ENCODE measurements at regions of chr7 and their contacts with region 1.

Region 1: DNA sequence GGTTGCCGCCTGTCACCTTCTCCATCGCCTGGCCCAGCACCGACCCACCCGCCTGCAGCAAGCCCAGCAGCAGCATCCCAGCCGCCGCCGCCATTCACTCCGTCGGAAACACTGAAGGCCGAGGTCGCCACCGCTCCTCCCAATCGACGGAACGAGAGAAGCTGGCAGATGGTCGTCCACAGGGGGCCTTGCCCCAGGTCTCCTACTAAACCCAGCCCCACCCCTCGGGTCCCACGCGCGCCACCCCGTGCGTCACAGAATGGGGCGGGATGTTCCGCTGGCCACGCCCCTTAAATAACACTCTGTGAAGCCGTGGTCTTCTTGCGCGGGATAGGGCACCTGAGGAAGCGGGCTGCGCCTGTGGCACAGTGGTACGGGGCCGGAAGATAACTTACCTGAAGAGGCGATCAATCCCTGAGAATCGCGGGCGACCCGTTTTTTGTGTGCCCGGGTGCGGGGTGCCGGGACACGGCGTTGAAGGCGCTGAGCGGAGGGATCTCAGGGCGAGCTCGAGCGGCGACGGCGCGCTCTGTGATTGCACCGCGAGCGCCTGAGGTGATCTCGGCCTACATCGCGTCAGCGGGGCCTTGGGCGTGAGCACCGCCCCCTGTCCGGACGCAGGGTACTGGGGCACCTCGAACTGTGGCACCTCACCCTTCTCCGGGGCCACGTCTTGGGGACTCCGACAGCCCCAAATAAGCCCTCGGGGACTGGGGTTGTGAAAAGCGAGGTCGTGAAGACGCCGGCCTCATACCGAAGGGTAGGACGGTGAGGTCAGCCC is at the start of gene CYP51A1:
- DNase-seq: peak; percentile 94
- H3K4me3 ChIP-seq: peak within 1 kb of the TSS; percentile 92
- H3K27ac ChIP-seq: peak within 1 kb of the TSS; percentile 68
- H3K4me1 ChIP-seq: peaks cover 40% of the 10 kb centered on the region
- CTCF ChIP-seq: 0 out of 2 replicates have a peak, but pooled peaks have one; percentile 22
- total RNA-seq, gene CYP51A1: 51.7 and 53.4 TPM in 2 replicates

Region 2: DNA sequence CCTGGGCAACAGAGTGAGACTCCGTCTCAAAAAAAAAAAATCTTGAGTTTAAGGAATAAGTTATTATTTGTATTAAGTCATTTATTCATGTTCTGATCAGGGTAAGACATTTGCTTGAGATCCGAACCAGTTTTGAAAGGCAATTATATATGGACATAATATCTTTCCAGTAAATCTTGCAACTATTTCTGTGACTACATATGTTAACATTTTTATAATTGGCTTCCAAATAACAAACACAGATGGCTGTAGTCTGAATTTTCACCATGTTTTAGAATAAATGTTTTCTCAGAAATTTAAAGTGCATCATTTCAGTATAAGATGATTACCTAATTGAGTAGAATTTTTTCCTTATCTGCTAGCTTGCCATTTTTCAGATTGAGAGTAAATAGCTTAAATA is 172.6 kb before region 1 on chr7:
- CTCF ChIA-PET with region 1: no interaction called
- POLR2A ChIA-PET with region 1: no interaction called
- intact Hi-C with region 1: no loop called
- DNase-seq: no peak
- H3K4me3 ChIP-seq: no peak overlapping the region
- H3K27ac ChIP-seq: no peak overlapping the region
- H3K4me1 ChIP-seq: no peaks in the 10 kb centered on the region
- CTCF ChIP-seq: no peak

Region 3: DNA sequence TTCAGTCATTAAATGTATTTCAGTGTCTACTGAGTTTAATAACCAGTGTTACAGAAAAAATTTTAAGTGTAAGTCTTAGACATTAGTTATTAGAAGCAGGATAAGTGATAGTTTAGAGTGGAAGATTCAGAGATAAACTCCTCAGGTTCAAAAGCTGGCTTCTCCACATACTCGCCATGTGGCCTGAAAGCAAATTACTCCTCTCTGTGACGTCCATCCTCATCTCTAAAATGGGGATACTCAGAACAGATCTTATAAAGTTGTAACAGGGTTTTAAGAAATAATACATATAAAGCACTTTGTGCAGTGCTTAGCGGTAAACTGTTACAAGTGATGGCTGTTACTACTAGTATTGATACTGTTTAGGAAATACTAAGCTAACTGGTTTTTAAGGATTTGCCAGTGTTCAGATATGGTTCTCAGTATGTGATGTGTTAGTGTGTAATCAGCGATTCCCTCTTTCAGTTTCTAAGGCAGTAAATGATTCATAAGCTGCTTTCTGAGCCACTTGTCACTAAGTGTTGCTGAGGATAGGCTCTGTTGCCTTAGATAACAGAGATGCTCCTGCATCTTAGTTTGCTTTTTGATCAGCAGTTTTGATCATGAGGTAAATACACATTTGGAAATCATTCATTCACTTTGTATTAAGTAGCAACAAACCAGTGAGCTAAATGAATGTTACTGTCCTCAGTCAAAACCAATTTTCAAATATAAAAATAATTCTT is 58.9 kb before region 1 on chr7:
- CTCF ChIA-PET with region 1: no interaction called
- POLR2A ChIA-PET with region 1: no interaction called
- intact Hi-C with region 1: no loop called
- DNase-seq: no peak
- H3K4me3 ChIP-seq: no peak overlapping the region
- H3K27ac ChIP-seq: no peak overlapping the region
- H3K4me1 ChIP-seq: no peaks in the 10 kb centered on the region
- CTCF ChIP-seq: no peak

Region 4: DNA sequence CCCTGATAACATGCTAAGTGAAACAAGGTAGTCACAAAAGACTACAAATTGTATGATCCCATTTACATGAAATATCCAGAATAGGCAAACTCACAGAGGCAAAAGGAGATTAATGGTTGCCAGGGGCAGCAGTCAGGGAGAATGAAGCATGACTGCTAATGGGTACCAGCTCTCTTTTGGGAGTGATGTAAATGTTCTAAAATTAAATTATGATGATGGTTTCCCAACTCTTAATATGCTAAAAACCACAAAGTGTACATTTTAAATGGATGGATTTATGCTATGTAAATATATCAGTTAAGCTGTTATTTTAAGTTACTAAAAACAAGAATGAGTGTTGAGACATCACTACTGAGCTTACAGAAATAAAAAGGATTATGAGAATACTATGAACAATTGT is 12.8 kb before region 1 on chr7:
- CTCF ChIA-PET with region 1: interaction called, 4 read pairs
- POLR2A ChIA-PET with region 1: interaction called, 10 read pairs
- intact Hi-C with region 1: no loop called
- DNase-seq: no peak
- H3K4me3 ChIP-seq: no peak overlapping the region
- H3K27ac ChIP-seq: no peak overlapping the region
- H3K4me1 ChIP-seq: no peaks in the 10 kb centered on the region
- CTCF ChIP-seq: no peak

Region 5: DNA sequence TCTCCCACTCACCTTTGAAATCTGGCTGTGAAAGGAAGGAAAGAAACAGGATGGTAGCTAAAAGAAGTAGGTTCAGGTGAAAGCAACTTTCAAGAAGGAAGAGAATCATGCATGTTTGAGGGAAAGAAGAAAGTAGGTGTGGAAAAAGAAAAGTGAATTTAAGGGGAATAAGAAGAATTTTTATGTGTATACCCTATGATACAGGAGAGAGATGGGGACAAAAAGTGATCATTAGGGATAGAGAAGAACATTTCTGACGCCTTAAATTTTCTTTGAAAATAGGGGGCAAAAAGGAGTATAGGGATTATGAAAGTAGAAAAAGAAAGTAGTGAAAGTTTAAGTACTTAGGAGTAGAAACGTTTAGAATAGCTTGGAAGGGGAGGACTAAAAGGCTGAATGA is 96.1 kb after region 1 on chr7:
- CTCF ChIA-PET with region 1: no interaction called
- POLR2A ChIA-PET with region 1: no interaction called
- intact Hi-C with region 1: no loop called
- DNase-seq: no peak
- H3K4me3 ChIP-seq: no peak overlapping the region
- H3K27ac ChIP-seq: no peak overlapping the region
- H3K4me1 ChIP-seq: no peaks in the 10 kb centered on the region
- CTCF ChIP-seq: no peak

Region 6: DNA sequence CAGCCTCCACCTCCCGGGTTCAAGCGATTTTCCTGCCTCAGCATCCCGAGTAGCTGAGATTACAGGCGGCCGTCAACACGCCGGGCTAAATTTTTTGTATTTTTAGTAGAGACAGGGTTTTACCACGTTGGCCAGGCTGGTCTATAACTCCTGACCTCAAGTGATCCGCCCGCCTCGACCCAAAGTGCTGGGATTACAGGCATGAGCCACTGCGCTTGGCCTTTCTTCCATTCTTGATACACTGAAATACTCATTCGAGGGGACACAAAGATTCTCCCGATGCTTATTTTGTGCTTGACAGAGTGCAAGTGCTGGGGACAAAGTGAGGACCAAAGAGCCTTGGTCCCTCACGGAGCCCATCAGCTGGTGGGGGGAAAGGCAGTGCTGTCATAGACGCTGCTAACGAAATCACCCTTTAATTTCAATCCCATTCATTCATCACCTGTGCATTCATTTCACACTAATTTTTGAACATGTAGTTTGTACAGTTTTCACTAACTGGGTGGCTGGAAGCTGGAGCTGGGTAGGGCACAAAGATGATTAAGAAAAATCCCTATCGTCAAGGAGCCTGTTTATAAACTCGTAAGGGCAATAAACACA is 456.4 kb after region 1 on chr7:
- CTCF ChIA-PET with region 1: no interaction called
- POLR2A ChIA-PET with region 1: interaction called, 3 read pairs
- intact Hi-C with region 1: loop called (anchors 1 kb)
- DNase-seq: no peak
- H3K4me3 ChIP-seq: peak overlapping the region; percentile 89
- H3K27ac ChIP-seq: no peak overlapping the region
- H3K4me1 ChIP-seq: peaks cover 35% of the 10 kb centered on the region
- CTCF ChIP-seq: no peak

Measured in OCI-LY7 (cell line).